Mammary epithelial cell (primary cell): ENCODE measurements at regions of chr7 and their contacts with region 1.

Region 1: GRCh38 chr7:20219446-20220292 is 2.5 kb upstream of the MACC1 start:
- DNase-seq: peak; percentile 91
- H3K4me3 ChIP-seq: no peak overlapping the region
- H3K27ac ChIP-seq: no peak overlapping the region
- H3K4me1 ChIP-seq: peaks cover 23% of the 10 kb centered on the region
- H3K27me3 ChIP-seq: no peaks in the 10 kb centered on the region
- CTCF ChIP-seq: no peak

Region 2: GRCh38 chr7:20236790-20237189 is 17.1 kb after region 1 on chr7:
- CTCF ChIA-PET with region 1: no interaction called
- dilution Hi-C with region 1: no loop called
- in situ Hi-C with region 1: no loop called
- intact Hi-C with region 1: loop called (anchors 2 kb)
- DNase-seq: peak; percentile 78
- H3K4me3 ChIP-seq: no peak overlapping the region
- H3K27ac ChIP-seq: no peak overlapping the region
- H3K4me1 ChIP-seq: peaks cover 39% of the 10 kb centered on the region
- H3K27me3 ChIP-seq: no peaks in the 10 kb centered on the region
- CTCF ChIP-seq: no peak

Region 3: DNA sequence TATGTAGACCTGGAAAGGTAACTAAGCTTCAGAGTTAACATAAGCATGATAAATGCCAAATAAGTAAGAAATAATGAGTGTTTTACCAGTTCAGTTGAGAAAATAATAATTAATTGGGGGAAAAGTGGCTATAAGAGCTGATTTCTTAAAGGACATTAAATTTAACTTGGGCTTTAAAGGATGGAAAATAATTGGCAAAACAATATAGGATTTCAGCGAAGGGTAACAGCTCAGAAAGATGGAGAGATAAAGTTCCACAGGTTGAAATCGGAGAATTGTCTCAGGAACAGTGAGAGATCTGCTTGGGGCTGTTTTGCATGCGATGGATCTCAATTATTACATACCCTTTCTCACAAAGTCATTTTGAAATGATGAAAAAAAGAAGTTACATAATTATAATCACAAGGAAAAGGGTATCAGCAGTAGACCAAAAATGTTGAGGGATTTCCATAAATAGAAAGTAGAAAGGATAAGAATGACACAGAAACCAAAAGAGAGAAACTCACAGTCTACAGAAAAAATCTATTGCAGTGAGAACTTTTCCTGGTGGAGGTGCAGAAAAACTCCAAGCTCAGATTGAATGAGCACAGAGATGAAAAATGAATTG is 70.9 kb after region 1 on chr7:
- CTCF ChIA-PET with region 1: no interaction called
- dilution Hi-C with region 1: no loop called
- in situ Hi-C with region 1: no loop called
- intact Hi-C with region 1: loop called (anchors 5 kb)
- DNase-seq: no peak
- H3K4me3 ChIP-seq: no peak overlapping the region
- H3K27ac ChIP-seq: no peak overlapping the region
- H3K4me1 ChIP-seq: no peaks in the 10 kb centered on the region
- H3K27me3 ChIP-seq: no peaks in the 10 kb centered on the region
- CTCF ChIP-seq: no peak

Region 4: GRCh38 chr7:20299647-20300312 is 80.1 kb after region 1 on chr7:
- CTCF ChIA-PET with region 1: no interaction called
- dilution Hi-C with region 1: loop called (anchors 5 kb)
- in situ Hi-C with region 1: no loop called
- intact Hi-C with region 1: loop called (anchors 5 kb)
- DNase-seq: peak; percentile 5
- H3K4me3 ChIP-seq: no peak overlapping the region
- H3K27ac ChIP-seq: no peak overlapping the region
- H3K4me1 ChIP-seq: peaks cover 8% of the 10 kb centered on the region
- H3K27me3 ChIP-seq: no peaks in the 10 kb centered on the region
- CTCF ChIP-seq: no peak